ENCODE measurements at regions of chr12 and their contacts with region 1.

Region 1: GRCh38 chr12:113244047-113244460 is 22.8 kb downstream of the TPCN1 start:
- DNase-seq: no peak
- H3K4me3 ChIP-seq: no peak overlapping the region
- H3K27ac ChIP-seq: 0 out of 2 replicates have a peak overlapping the region, but pooled peaks have one; percentile 23
- H3K4me1 ChIP-seq: peaks cover 14 to 38% (median 18%) of the 10 kb centered on the region in 4 experiments
- H3K27me3 ChIP-seq: no peaks in the 10 kb centered on the region
- CTCF ChIP-seq: no peak
- EP300 ChIP-seq: no peak
- POLR2A ChIP-seq: no peak
- RAD21 ChIP-seq: no peak

Region 2: DNA sequence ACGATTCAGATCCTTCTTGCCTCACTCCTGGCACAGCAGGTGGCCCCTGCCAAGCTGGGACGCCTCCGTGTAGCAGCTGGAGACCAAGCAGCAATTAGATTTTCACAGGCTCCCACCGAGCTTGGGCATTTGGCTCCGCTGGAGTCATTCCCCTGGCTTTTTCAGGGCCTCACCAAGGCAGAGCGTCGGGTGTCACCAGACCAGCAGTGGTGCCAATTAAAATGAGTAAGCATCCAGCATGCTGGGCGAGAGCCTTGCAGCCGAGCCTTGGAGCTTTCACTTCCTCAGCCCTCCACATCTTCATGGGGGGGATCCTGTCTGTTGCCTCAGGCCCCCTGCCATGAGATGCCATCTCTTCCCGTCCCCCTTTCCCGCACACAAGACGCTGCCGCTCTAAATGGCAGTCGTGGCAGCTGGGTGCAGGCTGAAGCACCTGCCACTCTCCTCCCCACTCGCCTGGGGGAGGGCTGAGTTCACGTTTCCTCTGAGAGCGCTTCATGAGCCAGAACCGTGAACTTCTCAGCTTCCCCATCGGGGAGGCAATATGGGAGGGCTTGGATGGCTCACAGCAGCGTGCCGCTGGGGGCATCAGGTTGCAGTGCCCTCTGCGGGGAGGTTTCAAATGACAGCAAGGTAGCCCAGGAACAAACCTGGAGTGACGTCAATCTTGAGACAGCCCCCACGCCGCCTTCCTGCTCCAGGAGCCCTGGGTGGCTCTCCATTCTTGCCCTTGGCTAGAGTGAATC is 11.0 kb before region 1 on chr12:
- CTCF ChIA-PET with region 1: interaction called, 9 read pairs
- POLR2A ChIA-PET with region 1: interaction called, 25 read pairs
- DNase-seq: peak in 1 of 2 experiments; percentile 72
- H3K4me3 ChIP-seq: peak overlapping the region in 2 of 4 experiments; percentile 1 to 29; a peak in 2 of 8 replicates
- H3K27ac ChIP-seq: peak overlapping the region; percentile 63; the same call in 1 of the 2 replicates
- H3K4me1 ChIP-seq: peaks cover 9 to 20% (median 20%) of the 10 kb centered on the region in 4 experiments
- H3K27me3 ChIP-seq: no peaks in the 10 kb centered on the region; a peak in 1 of 7 replicates
- CTCF ChIP-seq: peak; percentile 33 to 47 (median 45)
- EP300 ChIP-seq: no peak
- POLR2A ChIP-seq: no peak
- RAD21 ChIP-seq: peak; percentile 37 to 41

Region 3: DNA sequence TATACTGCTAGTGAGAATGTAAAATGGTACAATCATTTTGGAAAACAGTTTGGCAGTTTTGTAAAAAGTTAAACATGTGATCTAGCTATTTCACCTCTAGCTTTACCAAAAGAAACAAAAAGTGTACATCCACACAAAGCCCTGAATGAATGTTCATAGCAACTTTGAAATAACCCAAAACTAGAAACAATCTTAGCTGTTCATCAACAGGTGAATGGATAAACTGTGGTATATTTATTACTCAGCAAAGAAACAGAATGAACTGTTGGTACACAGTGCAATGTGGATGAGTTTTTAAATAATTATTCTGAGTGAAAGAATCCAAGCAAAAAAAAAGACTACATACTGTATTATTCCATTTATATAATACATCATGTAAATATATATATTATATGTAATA is 13.5 kb after region 1 on chr12:
- CTCF ChIA-PET with region 1: interaction called, 4 read pairs
- POLR2A ChIA-PET with region 1: interaction called, 14 read pairs
- DNase-seq: no peak
- H3K4me3 ChIP-seq: no peak overlapping the region
- H3K27ac ChIP-seq: no peak overlapping the region
- H3K4me1 ChIP-seq: peaks cover 0 to 3% (median 0%) of the 10 kb centered on the region in 4 experiments; a peak in 4 of 7 replicates
- H3K27me3 ChIP-seq: no peaks in the 10 kb centered on the region
- CTCF ChIP-seq: no peak
- EP300 ChIP-seq: no peak
- POLR2A ChIP-seq: no peak
- RAD21 ChIP-seq: no peak

Region 4: GRCh38 chr12:113341535-113341934 is 97.5 kb after region 1 on chr12:
- CTCF ChIA-PET with region 1: no interaction called
- POLR2A ChIA-PET with region 1: no interaction called
- DNase-seq: no peak
- H3K4me3 ChIP-seq: no peak overlapping the region
- H3K27ac ChIP-seq: no peak overlapping the region
- H3K4me1 ChIP-seq: peaks cover 0 to 3% (median under 1%) of the 10 kb centered on the region in 4 experiments; a peak in 3 of 7 replicates
- H3K27me3 ChIP-seq: no peaks in the 10 kb centered on the region
- CTCF ChIP-seq: no peak
- EP300 ChIP-seq: no peak
- POLR2A ChIP-seq: no peak
- RAD21 ChIP-seq: no peak